GM10248 (cell line): ENCODE measurements at regions of chr5 and their contacts with region 1.

Region 1: GRCh38 chr5:142699184-142699720 is 13.4 kb upstream of the FGF1 start:
- DNase-seq: peak; percentile 68
- CTCF ChIP-seq: peak; percentile 94

Region 2: DNA sequence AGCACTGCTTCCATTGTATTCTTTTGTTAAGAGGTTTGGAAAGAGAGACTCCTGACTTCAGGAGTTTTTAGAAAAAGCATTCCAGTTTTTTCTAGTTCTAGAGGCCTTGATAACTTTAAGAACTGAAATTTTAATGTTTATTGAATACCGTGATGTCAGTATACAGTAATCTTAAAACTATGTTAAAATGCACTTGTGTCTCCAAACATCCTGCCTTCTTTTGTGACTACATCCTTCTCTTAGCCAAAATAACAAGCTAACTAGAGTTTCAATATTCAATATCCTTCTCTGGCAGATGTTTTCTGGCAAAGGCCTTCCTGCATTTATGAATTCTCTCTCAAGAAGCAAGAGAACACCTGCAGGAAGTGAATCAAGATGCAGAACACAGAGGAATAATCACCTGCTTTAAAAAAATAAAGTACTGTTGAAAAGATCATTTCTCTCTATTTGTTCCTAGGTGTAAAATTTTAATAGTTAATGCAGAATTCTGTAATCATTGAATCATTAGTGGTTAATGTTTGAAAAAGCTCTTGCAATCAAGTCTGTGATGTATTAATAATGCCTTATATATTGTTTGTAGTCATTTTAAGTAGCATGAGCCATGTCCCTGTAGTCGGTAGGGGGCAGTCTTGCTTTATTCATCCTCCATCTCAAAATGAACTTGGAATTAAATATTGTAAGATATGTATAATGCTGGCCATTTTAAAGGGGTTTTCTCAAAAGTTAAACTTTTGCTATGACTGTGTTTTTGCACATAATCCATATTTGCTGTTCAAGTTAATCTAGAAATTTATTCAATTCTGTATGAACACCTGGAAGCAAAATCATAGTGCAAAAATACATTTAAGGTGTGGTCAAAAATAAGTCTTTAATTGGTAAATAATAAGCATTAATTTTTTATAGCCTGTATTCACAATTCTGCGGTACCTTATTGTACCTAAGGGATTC is 547.5 kb before region 1 on chr5:
- CTCF ChIA-PET with region 1: interaction called, 29 read pairs
- POLR2A ChIA-PET with region 1: no interaction called
- DNase-seq: peak; percentile 39
- CTCF ChIP-seq: peak; percentile 82

Region 3: DNA sequence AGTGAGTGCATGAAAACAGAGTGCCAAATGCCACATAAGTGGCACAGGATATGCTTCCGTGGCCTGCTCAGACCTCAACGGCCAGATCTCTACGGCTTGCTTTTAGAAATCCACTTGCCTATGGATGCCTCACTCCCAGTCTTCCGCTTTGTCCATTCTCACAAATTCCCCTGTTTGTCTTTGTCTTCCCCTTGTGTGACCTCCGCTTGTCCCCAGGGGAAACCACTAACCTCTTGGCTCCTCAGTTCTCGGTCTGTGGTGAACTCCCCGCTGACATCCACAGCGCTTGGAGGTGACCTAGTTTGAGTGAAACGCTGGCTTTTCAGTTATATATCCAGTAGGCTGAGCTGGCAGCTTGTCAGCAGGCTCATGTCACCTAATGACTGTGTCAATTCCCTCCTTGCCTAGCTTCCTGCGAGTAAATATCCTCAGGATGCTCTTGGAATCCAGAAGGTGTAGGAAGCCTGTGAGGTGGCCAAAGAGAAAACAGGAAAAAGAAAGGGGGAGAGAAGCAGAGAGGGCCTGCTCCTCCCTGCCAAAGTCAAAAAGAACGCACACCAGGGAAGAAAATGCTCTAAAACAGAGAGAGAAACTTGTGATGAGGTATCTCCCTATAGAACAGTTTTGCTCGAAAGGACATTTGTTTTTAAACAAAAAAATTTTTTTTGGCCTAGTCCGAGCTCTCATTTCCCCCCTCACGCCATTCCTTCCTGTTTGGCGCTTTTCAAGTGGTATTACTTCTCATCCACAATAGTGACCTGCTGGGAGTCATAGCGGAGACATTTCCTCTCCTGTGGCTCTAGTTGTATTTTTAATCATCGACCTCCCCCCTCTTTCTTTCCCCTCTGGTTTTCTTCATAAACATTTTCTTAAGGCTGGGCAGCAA is 272.9 kb before region 1 on chr5:
- CTCF ChIA-PET with region 1: no interaction called
- POLR2A ChIA-PET with region 1: no interaction called
- DNase-seq: no peak
- CTCF ChIP-seq: no peak

Region 4: DNA sequence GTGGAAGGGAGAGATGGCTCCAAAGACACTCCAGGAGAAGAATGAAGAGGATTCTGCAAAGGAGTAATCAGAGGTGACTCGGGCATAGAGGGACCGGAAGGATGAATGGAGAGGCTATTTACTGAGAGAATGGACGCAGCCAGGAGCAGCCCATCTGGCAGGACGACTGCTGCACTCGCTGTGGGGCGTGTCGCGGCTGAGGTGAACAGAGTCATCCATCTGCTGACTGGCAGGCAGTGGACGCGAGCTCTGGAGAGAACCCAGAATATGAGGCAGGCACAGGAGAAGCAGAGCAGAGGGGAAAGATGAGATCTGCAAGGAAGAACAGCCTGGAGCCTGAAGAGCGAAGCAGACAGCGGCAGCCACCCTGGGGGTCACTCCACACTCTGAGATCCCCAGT is 29.8 kb before region 1 on chr5:
- CTCF ChIA-PET with region 1: interaction called, 12 read pairs
- POLR2A ChIA-PET with region 1: no interaction called
- DNase-seq: no peak
- CTCF ChIP-seq: no peak

Region 5: DNA sequence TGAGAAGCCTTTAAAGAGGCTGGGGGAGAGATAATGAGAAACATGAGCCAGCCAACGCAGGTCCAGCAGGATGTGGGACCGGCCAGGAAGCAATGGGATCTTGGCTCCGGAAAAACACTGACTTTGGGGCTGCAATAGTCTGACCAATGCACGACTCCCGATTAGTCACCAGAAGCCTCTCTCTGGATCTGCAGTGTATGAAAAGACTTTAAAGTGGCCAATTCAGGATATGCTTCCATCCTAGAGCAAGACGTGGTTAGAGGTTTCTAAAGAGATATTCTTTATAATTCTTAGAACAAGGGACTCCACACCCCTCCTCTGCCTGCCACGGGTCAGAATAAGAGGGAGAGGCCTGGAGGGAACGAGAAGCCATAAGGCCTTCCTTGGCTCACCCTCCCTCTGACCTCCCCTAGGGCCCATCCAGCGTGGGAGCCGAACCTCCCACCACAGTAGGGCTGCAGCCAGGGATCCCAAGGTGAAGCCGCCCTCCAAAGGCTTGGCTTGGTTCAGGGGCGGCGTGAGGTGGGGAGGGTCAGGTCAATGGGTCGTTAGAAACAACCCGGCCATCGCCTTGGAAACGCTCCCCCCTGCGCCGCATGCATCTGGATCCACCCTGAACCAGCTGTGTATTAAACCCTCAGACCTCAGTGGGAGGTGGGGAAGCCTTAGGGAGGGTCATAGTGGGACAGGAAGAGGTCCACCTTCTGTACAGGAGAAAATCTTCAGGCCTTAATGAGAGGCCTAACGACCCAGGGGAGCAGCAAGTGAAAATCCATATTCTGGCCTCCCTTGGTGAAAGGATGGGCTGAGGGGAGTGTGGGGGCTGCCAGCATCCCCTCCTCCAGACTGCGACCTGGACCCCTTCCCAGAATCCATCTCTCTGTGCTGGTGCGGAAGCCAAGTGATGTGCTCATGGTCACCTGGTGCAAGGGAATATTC is 24.5 kb before region 1 on chr5:
- CTCF ChIA-PET with region 1: interaction called, 10 read pairs
- POLR2A ChIA-PET with region 1: no interaction called
- DNase-seq: no peak
- CTCF ChIP-seq: no peak

Region 6: DNA sequence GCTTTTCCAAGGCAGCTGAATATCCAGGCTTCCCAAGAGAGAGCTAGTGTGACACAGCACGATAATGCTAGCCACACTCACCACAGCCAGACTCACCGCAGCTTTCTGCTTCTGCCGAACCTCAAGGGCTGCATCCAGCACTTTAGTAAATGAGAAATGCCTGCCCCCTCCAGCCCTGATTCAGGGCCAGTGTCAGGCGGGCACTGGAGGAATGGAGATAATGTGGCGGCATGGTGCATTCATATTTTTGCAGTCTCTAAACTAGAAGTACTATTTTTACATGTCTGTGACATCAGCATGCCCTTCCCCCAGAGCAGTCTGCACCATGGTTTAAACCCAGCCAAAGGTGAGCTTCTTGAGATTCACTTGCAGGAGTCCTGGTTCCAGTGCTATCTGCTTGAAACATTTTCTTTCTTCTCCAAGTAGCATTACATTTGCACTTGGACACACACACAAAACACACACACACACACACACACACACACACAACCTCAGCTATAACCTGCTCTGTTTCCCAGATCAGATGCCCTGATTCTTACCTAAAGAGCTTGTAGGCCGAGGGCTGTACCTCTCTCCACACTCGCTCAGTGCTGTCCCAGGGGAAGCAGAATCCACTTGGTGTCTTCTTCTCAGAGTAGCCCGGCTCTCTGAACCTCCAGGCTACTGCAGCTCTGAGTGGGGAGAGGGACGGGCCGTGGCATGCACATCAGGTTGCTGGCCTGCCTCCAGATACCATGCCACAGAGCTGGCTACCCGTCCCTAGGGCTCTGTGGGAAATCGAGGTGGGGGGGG is 13.6 kb before region 1 on chr5 and contains the start of gene FGF1:
- CTCF ChIA-PET with region 1: interaction called, 15 read pairs
- POLR2A ChIA-PET with region 1: no interaction called
- DNase-seq: no peak
- CTCF ChIP-seq: no peak

Region 7: DNA sequence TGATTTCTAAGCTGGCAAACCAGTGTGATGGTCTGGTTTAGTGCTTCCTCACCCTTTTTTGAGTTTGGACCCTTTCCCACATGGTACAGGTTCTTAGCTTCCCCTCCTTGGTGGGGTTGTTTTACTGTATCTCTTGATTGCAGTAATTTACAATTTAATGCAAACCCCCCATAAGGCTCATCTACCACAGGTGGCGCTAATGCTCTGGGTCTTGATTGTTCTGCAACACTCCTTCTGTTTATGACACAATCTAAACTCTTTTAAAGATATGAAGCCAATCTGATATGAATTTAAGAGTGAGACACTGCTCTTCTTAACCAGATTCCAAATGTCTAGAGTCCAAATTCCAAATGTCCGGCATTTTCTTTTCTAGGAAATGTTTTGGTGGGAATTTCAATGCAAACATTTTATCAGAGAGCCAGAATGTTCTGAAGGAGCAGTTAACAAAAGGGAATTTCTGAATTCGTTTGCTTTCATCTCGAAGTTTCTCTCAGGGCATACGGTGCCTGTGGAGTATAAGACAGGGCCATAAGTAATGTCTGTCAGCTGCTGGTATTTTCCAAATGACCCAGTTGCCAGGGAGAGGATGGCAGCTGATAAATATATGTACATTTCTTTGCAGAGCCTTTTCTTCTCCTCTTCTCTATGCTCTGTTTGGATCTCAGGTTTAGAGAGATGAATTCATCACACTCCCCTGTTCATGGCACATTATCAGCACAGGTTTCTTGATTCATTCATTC is 317.7 kb after region 1 on chr5:
- CTCF ChIA-PET with region 1: no interaction called
- POLR2A ChIA-PET with region 1: no interaction called
- DNase-seq: peak; percentile 35
- CTCF ChIP-seq: peak; percentile 59